OCI-LY7 (cell line): ENCODE measurements at regions of chrX and their contacts with region 1.

Region 1: GRCh38 chrX:48574270-48575266 is at the start of gene RBM3:
- DNase-seq: peak; percentile 92
- H3K4me3 ChIP-seq: peak within 1 kb of the TSS; percentile 100
- H3K27ac ChIP-seq: peak within 1 kb of the TSS; percentile 86
- H3K4me1 ChIP-seq: peaks cover 36% of the 10 kb centered on the region
- CTCF ChIP-seq: peak; percentile 55
- total RNA-seq, gene RBM3: 149 and 156 TPM in 2 replicates

Region 2: DNA sequence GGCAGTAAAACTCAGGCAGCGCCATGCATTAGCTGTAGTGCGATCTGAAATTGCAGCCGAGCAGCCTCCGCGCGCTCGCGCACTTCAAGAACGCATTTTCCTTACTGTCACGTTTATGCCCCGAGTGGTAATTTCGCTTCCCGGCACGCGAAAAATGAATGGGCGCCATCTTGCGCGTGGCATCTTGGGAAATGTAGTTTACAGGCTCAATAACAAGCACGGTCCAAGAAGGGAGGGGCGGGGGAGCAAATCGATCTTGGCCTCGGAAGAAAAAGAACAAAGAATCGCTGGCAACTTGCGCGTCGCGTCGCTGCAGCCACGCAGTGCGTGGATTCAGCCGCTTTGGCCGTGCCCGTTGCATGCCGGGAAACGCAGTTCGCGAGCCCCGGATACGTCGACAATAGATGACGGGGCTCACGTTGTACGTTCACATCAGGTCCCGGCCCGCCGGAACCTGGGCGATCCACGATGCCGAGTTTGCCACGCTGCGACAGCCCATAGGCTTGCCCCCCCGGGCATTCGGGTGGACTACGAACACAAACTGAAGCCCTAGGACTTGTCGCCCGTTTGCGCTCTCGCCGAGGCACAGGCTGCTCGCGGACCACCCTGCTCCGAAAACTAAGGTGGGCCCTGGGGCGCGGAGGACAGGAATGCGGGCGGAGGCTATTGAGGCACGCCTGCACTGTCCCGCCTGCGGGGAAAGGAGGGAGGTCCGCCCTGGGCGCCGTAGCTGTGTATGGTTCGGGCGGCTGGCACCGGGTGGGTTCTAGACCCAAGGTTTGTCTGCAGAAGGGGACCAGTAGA is 98.6 kb before region 1 on chrX and contains the start of gene FTSJ1:
- CTCF ChIA-PET with region 1: no interaction called
- POLR2A ChIA-PET with region 1: no interaction called
- intact Hi-C with region 1: loop called (anchors 5 kb)
- DNase-seq: peak; percentile 85
- H3K4me3 ChIP-seq: peak within 1 kb of the TSS; percentile 91
- H3K27ac ChIP-seq: peak within 1 kb of the TSS; percentile 66
- H3K4me1 ChIP-seq: peaks cover 19% of the 10 kb centered on the region
- CTCF ChIP-seq: no peak
- total RNA-seq, gene FTSJ1: 55.7 and 66.1 TPM in 2 replicates

Region 3: DNA sequence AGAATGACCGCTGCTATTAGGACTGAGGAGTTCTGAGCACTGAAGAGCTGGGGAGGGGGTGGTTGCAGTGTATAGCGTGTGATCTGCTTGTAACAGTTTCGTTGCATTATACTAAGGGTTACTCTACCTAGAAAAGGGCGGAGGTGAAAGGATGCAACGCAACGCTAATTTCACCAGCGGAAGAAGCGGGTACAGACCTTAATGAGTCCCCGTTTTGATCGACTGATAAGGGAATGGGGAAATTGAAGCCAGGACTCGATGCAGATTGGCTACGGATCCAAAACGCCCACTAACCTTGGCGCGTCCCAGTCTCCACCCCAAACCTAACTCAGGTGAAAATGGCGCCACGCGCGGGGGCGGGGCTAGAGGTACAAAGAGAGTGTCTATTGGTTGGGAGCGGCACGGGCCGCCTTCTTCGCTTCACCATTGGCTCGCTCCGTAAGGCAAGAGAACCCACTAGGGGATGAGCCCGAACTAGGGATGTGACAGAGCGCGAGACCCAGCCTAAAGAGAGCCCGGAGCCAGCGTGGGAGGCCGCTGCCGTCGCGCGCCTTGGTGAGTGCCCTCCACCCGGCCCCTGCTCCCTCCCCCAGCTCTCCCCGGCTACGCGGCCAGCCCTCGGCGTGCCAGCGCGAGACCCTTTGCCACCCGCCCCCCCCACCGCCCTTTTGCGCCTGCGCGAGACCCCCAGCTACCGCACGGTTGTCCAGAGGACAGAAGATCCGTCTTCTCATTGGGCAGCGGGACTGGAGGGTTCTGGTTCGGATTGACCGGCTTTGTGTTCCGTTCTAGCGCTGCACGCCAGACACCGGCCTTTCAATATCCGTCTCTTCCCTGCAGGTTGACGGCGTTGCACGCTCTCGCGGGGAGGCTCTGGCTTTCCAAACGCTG is 53.0 kb before region 1 on chrX and contains the start of gene EBP:
- CTCF ChIA-PET with region 1: no interaction called
- POLR2A ChIA-PET with region 1: interaction called, 3 read pairs
- intact Hi-C with region 1: loop called (anchors 5 kb)
- DNase-seq: peak; percentile 94
- H3K4me3 ChIP-seq: peak within 1 kb of the TSS; percentile 95
- H3K27ac ChIP-seq: peak within 1 kb of the TSS; percentile 95
- H3K4me1 ChIP-seq: peaks cover 50% of the 10 kb centered on the region
- CTCF ChIP-seq: no peak
- total RNA-seq, gene EBP: 94.4 and 101 TPM in 2 replicates

Region 4: DNA sequence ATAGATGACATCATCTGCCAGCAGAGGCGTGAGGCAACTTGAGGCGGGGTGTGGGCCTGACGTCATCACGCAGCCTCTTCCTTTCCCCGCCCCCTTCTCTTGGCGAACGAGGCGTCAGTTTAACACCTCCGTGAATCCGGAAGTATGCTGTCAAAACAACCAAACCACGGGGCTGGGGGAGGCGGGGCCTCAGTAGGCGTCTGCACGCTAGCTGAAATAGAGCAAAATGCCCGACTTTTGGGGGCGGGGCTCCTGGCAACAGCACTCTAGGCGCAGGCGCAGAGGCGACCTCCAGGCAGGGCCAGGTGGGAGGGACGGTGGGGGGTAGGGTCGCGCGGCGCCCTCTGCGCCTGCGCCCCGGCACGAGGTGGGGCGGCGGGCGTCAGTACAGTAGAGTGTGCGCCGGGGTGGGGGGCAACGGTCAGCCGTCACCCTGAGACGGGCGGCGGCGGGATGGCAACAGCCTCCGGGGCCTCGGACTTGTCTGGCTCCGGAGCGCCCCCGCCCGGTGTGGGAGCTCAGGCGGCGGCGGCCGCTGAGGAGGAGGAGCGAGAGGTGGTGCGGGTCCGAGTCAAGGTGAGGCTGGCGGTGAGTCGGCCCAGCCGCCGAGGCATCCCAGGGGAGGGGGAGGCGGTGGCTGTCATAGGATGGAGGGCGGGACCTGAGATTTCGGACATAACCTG is 35.1 kb before region 1 on chrX and contains the start of gene TBC1D25:
- CTCF ChIA-PET with region 1: interaction called, 3 read pairs
- POLR2A ChIA-PET with region 1: interaction called, 8 read pairs
- intact Hi-C with region 1: loop called (anchors 2 kb)
- DNase-seq: peak; percentile 98
- H3K4me3 ChIP-seq: peak within 1 kb of the TSS; percentile 80
- H3K27ac ChIP-seq: peak within 1 kb of the TSS; percentile 69
- H3K4me1 ChIP-seq: peaks cover 17% of the 10 kb centered on the region
- CTCF ChIP-seq: peak; percentile 66
- total RNA-seq, gene TBC1D25: 6.8 and 7.6 TPM in 2 replicates

Region 5: DNA sequence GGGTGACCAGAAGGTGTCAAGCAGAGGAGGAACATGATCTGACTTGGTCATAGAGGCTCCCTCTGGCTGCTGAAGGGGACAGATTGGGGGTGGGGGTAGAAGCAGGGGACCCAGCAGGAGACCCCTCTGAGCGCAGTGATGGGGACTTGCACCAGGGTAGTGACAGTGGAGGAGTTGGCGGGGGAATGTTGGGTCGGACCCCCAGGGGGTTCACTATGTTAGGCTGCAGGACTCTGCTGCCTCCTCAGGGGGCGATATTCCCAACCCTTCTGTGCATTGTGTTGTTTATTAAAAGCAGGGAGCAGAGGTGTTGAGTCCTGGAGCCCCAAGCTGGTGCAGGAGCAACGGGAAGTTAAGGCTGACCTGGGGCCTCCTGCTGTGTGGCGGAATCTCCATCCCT is 31.5 kb after region 1 on chrX:
- CTCF ChIA-PET with region 1: no interaction called
- POLR2A ChIA-PET with region 1: no interaction called
- intact Hi-C with region 1: no loop called
- DNase-seq: no peak
- H3K4me3 ChIP-seq: no peak overlapping the region
- H3K27ac ChIP-seq: no peak overlapping the region
- H3K4me1 ChIP-seq: no peaks in the 10 kb centered on the region
- CTCF ChIP-seq: 0 out of 2 replicates have a peak, but pooled peaks have one; percentile 26